Activated B cell treated with CpG ODN at 0.5 μM for 24 hours (primary cell): ENCODE measurements at regions of chr11 and their contacts with region 1.

Region 1: DNA sequence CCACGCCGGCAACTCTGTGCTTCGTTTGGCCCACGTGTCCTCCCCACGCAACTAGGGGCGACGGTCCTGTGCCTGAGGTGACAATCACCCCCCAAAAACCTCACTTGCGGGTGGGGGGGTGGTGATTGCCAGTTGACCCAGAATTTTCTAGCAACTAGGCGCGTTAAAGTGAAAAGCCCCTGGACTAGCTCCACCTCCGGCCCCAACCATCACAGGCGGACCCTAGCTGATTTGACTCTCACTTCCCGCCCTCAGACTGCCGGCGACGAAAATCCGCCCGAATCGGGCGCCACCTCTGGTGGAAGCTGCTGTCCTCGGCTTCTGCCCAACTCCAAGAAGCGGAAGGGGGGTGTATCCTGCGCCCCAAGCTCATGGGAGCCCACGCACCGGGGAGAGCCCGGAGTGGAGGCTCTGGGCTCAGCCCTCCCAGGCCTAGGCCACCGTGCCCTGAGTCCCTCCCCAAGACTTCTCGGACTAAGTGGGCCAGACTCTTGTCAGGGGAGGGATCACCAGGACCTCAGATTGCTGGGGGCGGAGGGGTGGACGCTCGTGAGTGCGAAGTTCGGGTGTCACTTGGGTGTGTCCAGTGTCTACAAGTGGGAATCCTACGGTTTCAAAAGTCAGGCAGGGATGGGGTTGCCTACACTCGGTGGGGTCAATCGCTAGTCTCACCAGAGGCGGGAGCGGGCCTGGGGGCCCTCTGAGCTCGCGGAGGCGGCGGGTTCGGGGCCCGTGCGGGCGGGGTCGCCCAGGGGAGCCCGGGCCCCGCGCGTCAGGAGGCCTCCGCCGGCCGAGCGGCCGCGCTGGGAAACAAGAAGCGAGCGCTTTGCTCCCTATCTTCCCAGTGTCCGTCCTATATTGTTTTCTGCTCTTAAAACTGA is 12.3 kb downstream of the PAX6 start:
- DNase-seq: no peak
- ATAC-seq: no peak
- H3K4me3 Mint-ChIP-seq: peak overlapping the region; percentile 11
- H3K27ac Mint-ChIP-seq: no peak overlapping the region
- H3K4me1 Mint-ChIP-seq: peaks cover 26% of the 10 kb centered on the region
- H3K27me3 Mint-ChIP-seq: peaks cover 71% of the 10 kb centered on the region
- CTCF ChIP-seq: no peak

Region 2: DNA sequence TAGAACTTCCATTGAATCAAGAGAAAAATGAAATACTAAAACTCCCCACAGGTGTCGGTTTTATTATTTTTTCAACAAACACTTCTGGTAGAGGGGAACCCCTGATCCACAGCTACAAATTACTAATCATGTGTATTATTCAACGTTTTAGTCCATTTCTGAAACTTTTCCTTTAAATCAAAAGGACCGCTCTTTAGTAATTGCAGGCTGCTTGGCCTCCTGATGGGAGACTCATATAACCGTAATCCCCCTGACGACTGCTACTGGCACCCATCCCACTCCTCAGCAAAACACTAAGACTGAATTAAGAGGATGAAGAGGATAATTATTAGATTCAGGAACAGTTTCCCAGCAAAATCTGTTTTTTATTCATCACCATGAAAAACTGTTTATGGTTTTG is 34.0 kb before region 1 on chr11:
- CTCF ChIA-PET with region 1: no interaction called
- POLR2A ChIA-PET with region 1: no interaction called
- intact Hi-C with region 1: no loop called
- DNase-seq: no peak
- ATAC-seq: no peak
- H3K4me3 Mint-ChIP-seq: no peak overlapping the region
- H3K27ac Mint-ChIP-seq: no peak overlapping the region
- H3K4me1 Mint-ChIP-seq: no peaks in the 10 kb centered on the region
- H3K27me3 Mint-ChIP-seq: no peaks in the 10 kb centered on the region
- CTCF ChIP-seq: no peak

Region 3: GRCh38 chr11:31810779-31811647 is 12.2 kb after region 1 on chr11 and contains the start of gene PAX6:
- CTCF ChIA-PET with region 1: no interaction called
- POLR2A ChIA-PET with region 1: no interaction called
- intact Hi-C with region 1: loop called (anchors 2 kb)
- DNase-seq: no peak
- ATAC-seq: peak; percentile 66
- H3K4me3 Mint-ChIP-seq: peak within 1 kb of the TSS; percentile 74
- H3K27ac Mint-ChIP-seq: peak within 1 kb of the TSS; percentile 54
- H3K4me1 Mint-ChIP-seq: peaks cover 45% of the 10 kb centered on the region
- H3K27me3 Mint-ChIP-seq: peaks cover 67% of the 10 kb centered on the region
- CTCF ChIP-seq: no peak
- total RNA-seq, gene PAX6: not detected in 2 replicates

Region 4: DNA sequence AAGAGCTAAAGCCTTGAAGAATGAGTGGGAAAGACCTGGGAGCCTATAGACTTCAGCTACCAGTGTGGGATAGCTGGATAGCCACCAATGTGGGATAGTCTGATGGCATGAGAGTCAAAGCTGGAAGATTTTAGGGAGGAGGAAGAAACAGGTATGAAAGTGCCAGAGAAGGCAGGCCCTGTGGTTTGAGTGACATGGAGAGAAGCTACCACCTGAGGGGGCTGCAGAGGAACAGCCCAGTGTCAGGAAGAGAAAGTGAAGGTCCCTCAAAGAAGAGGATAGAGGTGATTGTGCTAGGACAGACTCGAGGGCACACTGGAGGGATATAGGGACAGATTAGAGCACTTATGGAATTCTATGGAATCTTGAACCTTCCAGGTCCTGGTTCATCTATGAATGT is 35.4 kb after region 1 on chr11:
- CTCF ChIA-PET with region 1: no interaction called
- POLR2A ChIA-PET with region 1: no interaction called
- intact Hi-C with region 1: loop called (anchors 5 kb)
- DNase-seq: no peak
- ATAC-seq: no peak
- H3K4me3 Mint-ChIP-seq: no peak overlapping the region
- H3K27ac Mint-ChIP-seq: no peak overlapping the region
- H3K4me1 Mint-ChIP-seq: no peaks in the 10 kb centered on the region
- H3K27me3 Mint-ChIP-seq: peaks cover 26% of the 10 kb centered on the region
- CTCF ChIP-seq: no peak